Posterior vena cava (tissue), 2 donors: ENCODE measurements at regions of chr20 and their contacts with region 1.

Region 1: GRCh38 chr20:63501818-63502670 is 3.2 kb upstream of the EEF1A2 start:
- DNase-seq: peak; percentile 70

Region 2: GRCh38 chr20:63309261-63310071 is 192.6 kb before region 1 on chr20:
- intact Hi-C with region 1: loop called in 1 of 2 experiments (anchors 1 kb)
- DNase-seq: no peak

Region 3: GRCh38 chr20:63467294-63468083 is 34.6 kb before region 1 on chr20:
- intact Hi-C with region 1: loop called in 1 of 2 experiments (anchors 1 kb)
- DNase-seq: no peak